K562 (cell line): ENCODE measurements at regions of chr19 and their contacts with region 1.

Region 1: DNA sequence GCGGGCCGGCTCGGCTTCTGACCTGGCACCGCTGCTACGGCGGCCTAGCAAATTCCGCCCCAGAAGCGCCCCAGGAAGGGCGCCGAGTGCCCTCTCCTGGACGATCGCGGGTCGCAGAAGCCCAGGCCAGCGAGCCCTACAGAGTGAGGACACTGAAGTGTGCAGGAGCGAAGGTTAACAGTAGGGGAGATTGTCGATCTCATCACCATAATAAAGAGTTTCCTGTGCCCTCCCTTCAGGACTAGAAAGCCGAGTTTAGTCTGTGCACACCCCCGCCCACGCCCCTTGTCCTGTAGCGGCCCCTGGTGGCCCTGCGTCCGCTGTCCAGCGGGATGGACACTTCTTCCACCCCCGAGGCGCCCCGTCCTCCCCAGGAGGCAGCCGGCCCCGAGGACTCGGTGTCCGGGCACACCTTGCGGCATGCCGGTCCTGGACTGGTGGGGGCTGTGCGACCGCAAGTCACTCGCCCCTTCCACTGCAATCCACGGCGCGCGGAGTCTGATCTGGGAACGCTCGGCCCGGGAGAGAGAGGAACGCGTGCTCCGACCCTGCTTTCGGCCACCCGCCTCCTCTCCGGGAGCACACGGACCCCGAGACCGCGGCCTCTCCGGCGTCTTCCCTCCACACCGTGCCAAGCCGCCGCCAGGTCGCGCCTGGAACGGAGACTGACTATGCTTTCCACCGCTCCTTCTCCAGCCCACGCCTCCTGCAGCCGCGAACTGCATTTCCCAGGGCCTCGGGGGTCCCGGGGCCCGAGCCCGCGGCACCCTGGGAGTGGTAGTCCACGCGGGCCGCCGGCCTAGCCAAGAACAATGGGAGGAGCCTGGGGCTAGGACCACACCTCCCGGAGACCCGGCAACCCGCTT is 769 bp upstream of the KMT2B start:
- DNase-seq: peak; percentile 93 to 97 (median 94)
- ATAC-seq: peak; percentile 92
- H3K4me3 ChIP-seq: peak overlapping the region; percentile 96
- H3K27ac ChIP-seq: peak overlapping the region; percentile 79
- H3K4me1 ChIP-seq: peaks cover 14 to 64% of the 10 kb centered on the region in 2 experiments
- H3K27me3 ChIP-seq: peaks cover 2 to 24% of the 10 kb centered on the region in 2 experiments; a peak in 4 of 5 replicates
- CTCF ChIP-seq: peak; percentile 88 to 96 (median 95)
- EP300 ChIP-seq: no peak
- POLR2A ChIP-seq: peak; percentile 63
- RAD21 ChIP-seq: peak; percentile 89 to 94

Region 2: GRCh38 chr19:35549174-35549788 is 167.8 kb before region 1 on chr19:
- CTCF ChIA-PET with region 1: interaction called, 25 read pairs
- POLR2A ChIA-PET with region 1: no interaction called
- in situ Hi-C with region 1: no loop called
- intact Hi-C with region 1: loop called (anchors 2 kb)
- DNase-seq: peak; percentile 65 to 84 (median 74)
- ATAC-seq: peak; percentile 60
- H3K4me3 ChIP-seq: no peak overlapping the region
- H3K27ac ChIP-seq: no peak overlapping the region
- H3K4me1 ChIP-seq: peaks cover 14 to 50% of the 10 kb centered on the region in 2 experiments; a peak in 4 of 5 replicates
- H3K27me3 ChIP-seq: no peaks in the 10 kb centered on the region; a peak in 2 of 5 replicates
- CTCF ChIP-seq: peak; percentile 80 to 88 (median 82)
- EP300 ChIP-seq: no peak
- POLR2A ChIP-seq: no peak
- RAD21 ChIP-seq: peak; percentile 46 to 70

Region 3: GRCh38 chr19:35557539-35558399 is 159.3 kb before region 1 on chr19:
- CTCF ChIA-PET with region 1: interaction called, 4 read pairs
- POLR2A ChIA-PET with region 1: no interaction called
- in situ Hi-C with region 1: no loop called
- intact Hi-C with region 1: loop called (anchors 2 kb)
- DNase-seq: peak; percentile 91 to 94 (median 93)
- ATAC-seq: peak; percentile 92
- H3K4me3 ChIP-seq: peak overlapping the region; percentile 55
- H3K27ac ChIP-seq: no peak overlapping the region
- H3K4me1 ChIP-seq: peaks cover 4 to 50% of the 10 kb centered on the region in 2 experiments; a peak in 3 of 5 replicates
- H3K27me3 ChIP-seq: peaks cover 28 to 50% of the 10 kb centered on the region in 2 experiments; a peak in 4 of 5 replicates
- CTCF ChIP-seq: peak; percentile 38 to 79 (median 45); a peak in 4 of 6 replicates
- EP300 ChIP-seq: no peak
- POLR2A ChIP-seq: no peak
- RAD21 ChIP-seq: peak in 1 of 2 experiments; percentile 42; a peak in 2 of 4 replicates

Region 4: DNA sequence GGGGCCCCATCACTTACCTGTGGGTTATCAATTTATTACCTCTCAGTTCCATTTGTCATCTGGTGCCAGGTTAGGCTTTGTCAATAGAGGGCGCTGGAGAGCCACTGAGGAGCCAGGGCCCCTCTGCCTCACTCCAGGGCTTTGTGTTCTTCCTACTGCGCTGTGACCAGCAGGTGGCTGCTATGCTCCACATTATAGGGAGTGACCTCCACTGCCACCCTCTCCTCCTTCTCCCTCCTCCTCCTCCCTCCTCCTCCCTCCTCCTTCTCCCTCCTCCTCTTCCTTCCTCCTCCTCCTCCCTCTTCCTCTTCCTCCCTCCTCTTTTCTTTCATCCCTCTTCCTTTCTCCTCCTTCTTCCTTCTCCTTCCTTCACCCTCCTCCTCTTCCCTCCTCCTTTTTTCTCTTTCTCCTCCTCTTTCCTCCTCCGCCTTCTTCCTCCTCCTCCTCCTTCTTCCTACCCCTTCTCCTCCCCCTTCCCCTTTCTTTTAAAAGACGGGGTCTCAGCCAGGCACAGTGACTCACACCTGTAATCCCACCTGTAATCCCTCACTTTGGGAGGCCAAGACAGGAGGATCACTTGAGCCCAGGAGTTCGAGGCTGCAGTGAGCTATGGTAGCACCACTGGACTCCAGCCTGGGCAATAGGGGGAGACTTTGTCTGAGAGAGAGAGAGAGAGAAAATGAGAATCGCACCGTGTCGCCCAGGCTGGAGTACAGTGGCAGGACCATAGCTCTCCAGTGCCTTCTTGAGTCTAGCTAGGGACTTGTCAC is 23.0 kb before region 1 on chr19:
- CTCF ChIA-PET with region 1: interaction called, 76 read pairs
- POLR2A ChIA-PET with region 1: interaction called, 4 read pairs
- in situ Hi-C with region 1: no loop called
- intact Hi-C with region 1: loop called (anchors 1 kb)
- DNase-seq: peak; percentile 87 to 92 (median 89)
- ATAC-seq: peak; percentile 100
- H3K4me3 ChIP-seq: no peak overlapping the region
- H3K27ac ChIP-seq: no peak overlapping the region
- H3K4me1 ChIP-seq: no peaks in the 10 kb centered on the region; a peak in 1 of 5 replicates
- H3K27me3 ChIP-seq: no peaks in the 10 kb centered on the region
- CTCF ChIP-seq: peak; percentile 98 to 99 (median 99)
- EP300 ChIP-seq: no peak
- POLR2A ChIP-seq: no peak
- RAD21 ChIP-seq: peak; percentile 97 to 99

Region 5: GRCh38 chr19:35727053-35727947 is 10.3 kb after region 1 on chr19:
- CTCF ChIA-PET with region 1: no interaction called
- POLR2A ChIA-PET with region 1: interaction called, 12 read pairs
- in situ Hi-C with region 1: no loop called
- intact Hi-C with region 1: no loop called
- DNase-seq: no peak
- ATAC-seq: no peak
- H3K4me3 ChIP-seq: no peak overlapping the region
- H3K27ac ChIP-seq: no peak overlapping the region
- H3K4me1 ChIP-seq: peaks cover 0 to 4% of the 10 kb centered on the region in 2 experiments; a peak in 1 of 5 replicates
- H3K27me3 ChIP-seq: no peaks in the 10 kb centered on the region
- CTCF ChIP-seq: no peak
- EP300 ChIP-seq: no peak
- POLR2A ChIP-seq: no peak
- RAD21 ChIP-seq: no peak

Region 6: GRCh38 chr19:35822579-35822978 is 105.5 kb after region 1 on chr19:
- CTCF ChIA-PET with region 1: interaction called, 7 read pairs
- POLR2A ChIA-PET with region 1: interaction called, 3 read pairs
- in situ Hi-C with region 1: no loop called
- intact Hi-C with region 1: loop called (anchors 2 kb)
- DNase-seq: peak; percentile 32 to 50 (median 44)
- ATAC-seq: peak; percentile 86
- H3K4me3 ChIP-seq: peak overlapping the region; percentile 24
- H3K27ac ChIP-seq: no peak overlapping the region
- H3K4me1 ChIP-seq: peaks cover 0 to 5% of the 10 kb centered on the region in 2 experiments; a peak in 2 of 5 replicates
- H3K27me3 ChIP-seq: peaks cover 2 to 5% of the 10 kb centered on the region in 2 experiments; a peak in 2 of 5 replicates
- CTCF ChIP-seq: no peak
- EP300 ChIP-seq: no peak
- POLR2A ChIP-seq: no peak
- RAD21 ChIP-seq: no peak